Colonic mucosa (tissue), 4 donors: ENCODE measurements at regions of chr1 and their contacts with region 1.

Region 1: DNA sequence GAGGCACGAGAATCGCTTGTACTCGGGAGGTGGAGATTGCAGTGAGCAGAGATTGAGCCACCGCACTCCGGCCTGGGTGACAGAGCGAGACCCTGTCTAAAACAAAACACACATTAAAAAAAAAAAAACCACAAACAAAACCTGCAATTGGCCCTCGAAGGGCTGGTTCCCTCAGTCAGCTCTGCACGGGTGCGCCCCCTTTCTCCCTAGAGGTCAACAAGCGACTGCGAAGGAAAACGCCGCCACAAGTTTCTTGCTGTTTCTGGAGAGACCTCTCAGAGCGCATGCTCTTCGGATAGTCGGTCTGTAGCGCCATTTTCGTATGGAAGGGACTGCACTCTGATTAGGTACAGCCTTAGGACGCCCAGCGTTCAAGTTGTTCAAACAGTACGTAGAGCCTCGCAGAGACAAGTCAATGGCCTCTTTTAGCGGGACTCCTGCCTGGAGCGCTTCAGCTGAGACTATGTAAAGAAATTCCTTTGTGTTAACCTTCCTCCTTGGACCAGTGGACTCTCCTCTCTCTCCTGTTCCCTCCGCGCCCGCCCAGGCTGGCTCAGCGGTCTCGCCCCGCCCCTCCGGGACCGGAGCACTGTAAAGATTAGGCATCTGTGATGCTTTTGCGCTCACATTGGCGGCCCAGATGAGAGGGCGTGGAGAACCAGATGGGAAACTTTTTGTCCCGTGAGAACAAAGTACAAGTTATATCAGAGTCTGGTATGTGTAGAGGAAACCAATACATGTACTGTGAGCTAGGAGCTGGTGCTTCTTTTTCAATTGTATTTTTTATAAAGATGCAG is 1.0 kb upstream of the CDC14A start:
- DNase-seq: peak; percentile 96
- H3K4me3 ChIP-seq: peak overlapping the region; percentile 81
- H3K27ac ChIP-seq: peak overlapping the region; percentile 88
- H3K4me1 ChIP-seq: no peaks in the 10 kb centered on the region
- H3K27me3 ChIP-seq: no peaks in the 10 kb centered on the region
- CTCF ChIP-seq: peak; percentile 28

Region 2: GRCh38 chr1:100132566-100133477 is 218.5 kb before region 1 on chr1 and contains the starts of genes SASS6 and TRMT13:
- intact Hi-C with region 1: loop called (anchors 10 kb)
- DNase-seq: peak; percentile 99
- H3K4me3 ChIP-seq: peak within 1 kb of the TSS; percentile 76
- H3K27ac ChIP-seq: peak within 1 kb of the TSS; percentile 59
- H3K4me1 ChIP-seq: peaks cover 11% of the 10 kb centered on the region
- H3K27me3 ChIP-seq: no peaks in the 10 kb centered on the region
- CTCF ChIP-seq: no peak
- total RNA-seq, gene SASS6: 3.3 to 8.0 TPM
- total RNA-seq, gene TRMT13: 8.6 to 11.5 TPM

Region 3: DNA sequence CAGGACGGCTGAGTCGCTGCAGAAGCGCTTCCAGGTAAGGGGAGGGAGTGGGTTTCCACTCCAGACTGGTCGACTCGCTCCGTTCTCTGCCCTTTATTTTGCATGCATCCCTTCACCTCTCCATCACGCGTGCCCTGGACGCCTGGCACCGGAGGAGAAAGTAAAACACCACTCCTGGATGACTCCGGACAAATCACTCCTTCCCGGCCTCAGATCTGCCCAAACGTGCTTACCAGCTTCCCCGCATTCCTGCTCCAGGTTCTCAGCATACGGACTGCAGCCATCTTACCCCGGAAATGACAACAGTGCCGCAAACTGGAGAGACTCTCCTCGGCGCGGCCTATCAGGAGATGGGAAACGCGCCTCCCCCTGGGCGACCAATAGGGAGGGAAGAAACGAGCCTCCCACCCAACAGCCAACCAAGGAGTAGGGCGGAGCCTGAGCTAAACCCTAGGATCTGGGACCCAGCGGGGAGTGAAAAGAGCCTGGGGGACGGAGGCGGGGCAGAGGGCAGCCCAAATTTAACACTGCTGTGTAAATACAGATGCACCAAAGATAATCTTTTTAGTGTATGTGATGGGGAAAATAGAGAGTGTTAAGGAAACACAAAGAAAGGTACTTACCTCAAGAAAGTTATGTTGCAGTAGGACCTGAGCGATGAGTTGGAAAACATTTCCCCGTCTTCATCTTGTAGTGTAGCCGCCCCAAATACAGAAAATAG is 101.6 kb before region 1 on chr1 and contains the start of gene DBT:
- intact Hi-C with region 1: loop called (anchors 10 kb)
- DNase-seq: peak; percentile 97
- H3K4me3 ChIP-seq: peak within 1 kb of the TSS; percentile 67
- H3K27ac ChIP-seq: peak within 1 kb of the TSS; percentile 53
- H3K4me1 ChIP-seq: peaks cover 10% of the 10 kb centered on the region
- H3K27me3 ChIP-seq: no peaks in the 10 kb centered on the region
- CTCF ChIP-seq: no peak
- total RNA-seq, gene DBT: 15.5 to 20.3 TPM

Region 4: GRCh38 chr1:100430325-100430813 is 79.1 kb after region 1 on chr1:
- intact Hi-C with region 1: loop called (anchors 10 kb)
- DNase-seq: no peak
- H3K4me3 ChIP-seq: no peak overlapping the region
- H3K27ac ChIP-seq: no peak overlapping the region
- H3K4me1 ChIP-seq: no peaks in the 10 kb centered on the region
- H3K27me3 ChIP-seq: no peaks in the 10 kb centered on the region
- CTCF ChIP-seq: no peak